GM10248 (cell line): ENCODE measurements at regions of chr11 and their contacts with region 1.

Region 1: GRCh38 chr11:65506770-65507505 is 8.1 kb downstream of the MALAT1 start:
- DNase-seq: no peak
- CTCF ChIP-seq: no peak

Region 2: GRCh38 chr11:65382033-65382807 is 124.7 kb before region 1 on chr11 and contains the start of gene SLC25A45:
- CTCF ChIA-PET with region 1: interaction called, 9 read pairs
- POLR2A ChIA-PET with region 1: interaction called, 20 read pairs
- DNase-seq: peak; percentile 79
- CTCF ChIP-seq: peak; percentile 70

Region 3: DNA sequence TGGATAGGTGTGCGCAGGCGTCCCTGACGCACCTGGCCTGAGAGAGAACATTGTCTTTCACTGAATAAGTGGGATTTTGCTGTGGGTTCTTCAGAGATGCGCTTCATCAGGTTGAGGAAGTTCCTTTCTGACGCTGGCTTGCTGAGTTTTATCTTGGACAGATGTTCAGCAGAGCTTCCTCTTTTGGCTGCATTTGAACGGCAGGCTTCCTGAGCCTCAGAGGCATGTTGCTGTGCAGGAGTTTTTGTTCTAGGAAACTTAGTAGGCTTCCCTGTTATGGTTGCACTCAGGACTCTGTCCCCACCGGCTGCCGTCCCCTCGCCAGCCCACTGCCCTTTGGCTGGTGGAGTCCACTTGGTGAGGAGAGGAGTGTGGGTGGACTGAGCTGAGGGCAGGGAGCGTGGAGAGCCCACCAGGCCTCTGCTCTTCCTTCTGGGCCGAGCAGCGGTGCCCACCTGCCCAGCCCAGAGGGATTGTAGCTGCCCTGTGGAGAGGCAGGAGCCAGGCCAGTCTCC is 103.3 kb before region 1 on chr11:
- CTCF ChIA-PET with region 1: interaction called, 4 read pairs
- POLR2A ChIA-PET with region 1: interaction called, 17 read pairs
- DNase-seq: peak; percentile 62
- CTCF ChIP-seq: no peak

Region 4: DNA sequence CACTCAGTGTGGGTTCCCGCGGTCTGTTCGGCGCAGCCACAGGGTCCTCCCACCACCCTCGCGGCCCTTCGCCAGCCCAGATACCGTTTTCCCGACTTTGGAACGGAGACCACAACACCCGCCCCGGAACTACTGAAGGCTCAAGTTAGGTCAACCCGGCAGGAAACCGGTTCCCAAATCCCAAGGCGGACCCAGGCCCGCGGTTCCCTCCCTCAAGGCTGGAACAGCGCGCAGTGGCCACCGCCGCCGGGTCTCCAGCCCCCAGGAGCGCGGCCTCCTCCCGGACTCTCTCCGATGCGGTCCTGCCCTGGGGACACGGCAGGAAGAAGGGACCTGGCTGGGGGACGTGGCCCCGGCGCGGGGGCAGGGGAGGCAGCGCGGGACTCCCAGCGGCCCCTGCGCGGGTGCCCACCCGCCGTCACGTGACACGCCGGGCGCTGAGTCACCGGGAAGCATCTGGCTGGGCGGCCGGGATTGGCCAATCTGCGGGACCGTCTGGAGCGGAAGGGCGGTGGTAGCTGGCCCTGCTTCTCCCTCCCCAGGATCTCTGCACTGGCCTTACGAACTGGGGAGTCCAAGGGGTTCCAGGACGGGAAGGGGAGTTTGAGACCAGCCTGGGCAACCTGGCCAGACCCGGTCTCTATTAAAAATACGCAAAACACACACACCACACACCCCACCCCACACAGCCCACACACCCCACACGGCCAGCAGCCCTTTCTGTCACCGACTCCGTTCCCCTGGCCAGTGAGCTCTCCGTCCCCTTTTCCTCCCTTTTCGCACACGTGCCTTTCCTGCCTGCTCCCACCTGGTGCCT is 29.6 kb before region 1 on chr11:
- CTCF ChIA-PET with region 1: interaction called, 25 read pairs
- POLR2A ChIA-PET with region 1: interaction called, 305 read pairs
- DNase-seq: peak; percentile 93
- CTCF ChIP-seq: no peak

Region 5: DNA sequence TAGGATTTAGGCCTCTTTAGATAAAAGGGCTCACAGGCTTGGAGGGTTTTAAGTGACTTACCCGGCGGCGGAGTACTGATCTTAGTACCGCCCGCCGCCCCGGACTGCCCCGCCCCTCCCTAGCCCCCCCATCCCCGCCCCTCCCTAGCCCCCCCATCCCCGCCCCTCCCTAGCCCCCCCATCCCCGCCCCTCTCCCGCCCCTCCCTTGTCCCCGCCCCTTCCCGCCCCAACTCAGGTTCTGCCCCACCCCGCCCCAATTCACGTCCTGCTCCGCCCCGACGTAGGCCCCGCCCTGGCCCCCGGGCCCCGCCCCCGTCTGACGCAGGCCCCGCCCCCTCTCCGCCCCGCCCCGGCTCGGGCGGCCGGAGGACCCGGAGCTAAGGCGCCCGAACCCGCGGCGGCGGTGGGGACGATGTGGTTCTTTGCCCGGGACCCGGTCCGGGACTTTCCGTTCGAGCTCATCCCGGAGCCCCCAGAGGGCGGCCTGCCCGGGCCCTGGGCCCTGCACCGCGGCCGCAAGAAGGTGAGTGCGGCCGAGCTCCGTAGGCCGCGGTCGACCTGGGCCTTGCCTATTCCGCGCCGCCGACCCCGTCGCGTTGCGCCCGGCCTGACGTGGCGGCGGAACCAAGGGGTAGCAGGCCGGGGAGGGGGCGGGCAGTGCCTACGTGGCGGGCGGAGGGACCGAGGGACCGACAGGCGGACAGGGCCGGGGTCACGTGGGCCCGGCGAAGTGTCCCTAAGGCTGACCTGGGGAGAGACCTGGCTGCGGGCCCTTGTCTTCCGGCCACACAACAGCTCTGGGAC is 18.0 kb after region 1 on chr11 and contains the start of gene SCYL1:
- CTCF ChIA-PET with region 1: interaction called, 5 read pairs
- POLR2A ChIA-PET with region 1: interaction called, 18 read pairs
- DNase-seq: peak; percentile 96
- CTCF ChIP-seq: no peak

Region 6: DNA sequence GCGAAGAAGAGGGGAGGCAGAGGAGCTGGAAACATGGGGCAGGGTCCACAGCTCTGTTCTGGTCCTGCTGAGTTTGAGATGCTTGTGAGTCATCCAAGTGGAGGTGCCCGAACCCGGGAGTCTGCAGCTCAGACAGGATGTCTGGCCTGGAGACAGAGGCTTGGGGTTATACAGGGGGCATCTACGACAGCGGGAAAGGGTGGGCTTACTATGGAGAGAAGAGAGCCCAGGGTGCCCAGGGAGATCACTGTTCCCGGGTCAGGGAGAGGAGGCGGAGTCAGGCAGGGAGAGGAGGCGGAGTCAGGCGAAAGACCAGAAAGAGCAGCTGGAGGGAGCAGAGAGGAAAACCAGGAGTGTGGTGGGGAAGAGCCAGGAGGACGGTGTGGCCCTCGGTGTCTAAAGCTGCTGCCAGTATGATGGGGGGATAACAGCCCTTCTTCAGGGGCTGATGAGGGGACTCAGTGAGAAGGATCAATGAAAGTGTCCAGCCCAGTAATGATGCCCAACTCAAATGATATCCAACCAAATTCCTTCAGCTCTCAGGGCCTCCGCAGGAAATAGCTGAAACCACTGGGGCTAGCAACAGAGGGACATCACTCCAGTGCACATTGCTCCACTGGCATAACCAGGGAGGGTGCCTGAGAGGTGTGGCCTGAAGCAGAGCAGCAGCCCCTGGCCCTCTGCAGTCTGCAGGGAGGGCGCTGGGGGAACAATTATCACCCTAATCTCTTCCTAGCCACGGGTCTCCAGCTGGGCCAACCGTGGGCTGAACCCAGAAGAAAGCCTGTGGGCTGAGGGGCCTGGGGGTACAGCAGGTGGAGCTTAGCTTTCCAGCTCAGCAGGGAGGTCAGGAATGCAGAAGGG is 53.8 kb after region 1 on chr11:
- CTCF ChIA-PET with region 1: no interaction called
- POLR2A ChIA-PET with region 1: no interaction called
- DNase-seq: no peak
- CTCF ChIP-seq: no peak

Region 7: GRCh38 chr11:66296024-66296423 is 789.1 kb after region 1 on chr11:
- CTCF ChIA-PET with region 1: no interaction called
- POLR2A ChIA-PET with region 1: no interaction called
- DNase-seq: no peak
- CTCF ChIP-seq: no peak